PC-9 (cell line): ENCODE measurements at regions of chr5 and their contacts with region 1.

Region 1: DNA sequence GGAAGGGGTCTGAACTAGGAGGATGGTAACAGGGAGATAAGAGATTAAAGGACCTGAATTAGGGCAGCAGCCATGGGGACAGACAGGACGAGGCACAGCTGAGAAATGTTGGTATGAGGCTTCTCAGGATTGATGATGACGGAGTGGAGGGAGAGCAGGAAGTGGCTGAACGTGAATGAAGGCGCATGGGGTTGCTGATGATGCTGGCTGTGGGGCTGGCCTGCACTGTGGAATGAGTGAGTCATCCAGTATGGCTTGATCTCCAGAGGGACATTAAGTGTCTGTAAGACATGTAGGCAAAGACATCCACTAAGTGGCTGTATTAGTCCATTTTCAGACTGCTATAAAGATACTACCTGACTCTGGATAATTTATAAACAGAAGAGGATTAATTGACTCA is 256.4 kb downstream of the ICE1 start:
- DNase-seq: no peak
- H3K4me3 ChIP-seq: no peak overlapping the region
- H3K27ac ChIP-seq: no peak overlapping the region
- H3K4me1 ChIP-seq: no peaks in the 10 kb centered on the region
- H3K27me3 ChIP-seq: peaks cover 3% of the 10 kb centered on the region; the same call in 1 of the 2 replicates
- CTCF ChIP-seq: no peak

Region 2: DNA sequence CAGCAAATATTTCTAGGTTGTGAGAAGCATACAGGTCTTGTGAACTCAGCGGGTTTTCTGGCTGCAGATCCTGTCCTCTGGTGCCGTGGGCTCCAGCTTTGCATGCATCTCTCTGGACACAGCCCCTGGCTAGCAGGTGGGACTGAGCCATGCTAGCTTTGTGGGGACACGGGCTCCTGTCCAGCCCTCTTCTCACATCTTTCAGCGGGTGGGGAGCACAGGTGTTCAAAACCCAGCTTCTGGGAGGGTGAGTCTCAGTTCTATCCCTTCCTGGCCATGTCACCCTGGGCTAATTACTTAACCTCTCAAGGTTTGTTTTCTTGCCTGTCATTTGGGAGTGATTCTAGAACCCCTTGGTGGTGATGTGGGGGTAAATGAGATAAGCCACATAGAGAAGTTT is 94.2 kb before region 1 on chr5:
- CTCF ChIA-PET with region 1: no interaction called
- POLR2A ChIA-PET with region 1: interaction called, 17 read pairs
- intact Hi-C with region 1: no loop called
- DNase-seq: no peak
- H3K4me3 ChIP-seq: no peak overlapping the region
- H3K27ac ChIP-seq: no peak overlapping the region
- H3K4me1 ChIP-seq: no peaks in the 10 kb centered on the region
- H3K27me3 ChIP-seq: peaks cover 84% of the 10 kb centered on the region
- CTCF ChIP-seq: no peak